Sciatic nerve (tissue), 2 donors: ENCODE measurements at regions of chr1 and their contacts with region 1.

Region 1: GRCh38 chr1:115768549-115768948 is at the start of gene CASQ2:
- DNase-seq: no peak
- ATAC-seq: no peak
- total RNA-seq, gene CASQ2: 6.5 TPM

Region 2: DNA sequence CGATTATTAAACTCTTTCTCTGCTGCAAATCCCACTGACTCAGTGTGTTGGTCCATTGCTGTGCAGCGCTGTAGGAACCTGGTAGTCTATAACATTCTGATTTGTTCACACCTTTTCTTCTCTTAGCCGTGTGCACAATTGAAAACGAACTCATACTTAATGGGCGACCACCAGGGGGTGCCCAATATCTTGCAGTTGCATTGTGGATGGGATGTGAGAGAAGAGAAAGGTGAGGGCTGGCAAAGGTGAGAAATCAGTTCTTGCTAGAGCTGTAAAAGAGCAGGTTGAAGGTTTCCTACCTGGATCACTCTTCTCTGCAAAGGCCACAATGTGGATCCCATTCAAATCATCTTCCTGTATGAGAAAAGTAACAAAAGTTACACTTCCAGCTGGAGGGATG is 51.0 kb before region 1 on chr1:
- intact Hi-C with region 1: loop called (anchors 5 kb)
- DNase-seq: peak; percentile 71
- ATAC-seq: peak; percentile 63